ENCODE measurements at regions of chr17 and their contacts with region 1.

Region 1: GRCh38 chr17:43170766-43171585 is at the start of gene NBR1:
- DNase-seq: peak; percentile 97
- ATAC-seq: peak; percentile 86
- H3K4me3 Mint-ChIP-seq: no peak within 1 kb of the TSS
- H3K27ac Mint-ChIP-seq: no peak within 1 kb of the TSS
- H3K4me1 Mint-ChIP-seq: peaks cover 30% of the 10 kb centered on the region
- H3K27me3 Mint-ChIP-seq: no peaks in the 10 kb centered on the region
- total RNA-seq, gene NBR1: 52.8 to 55.6 TPM

Region 2: GRCh38 chr17:42744806-42745617 is 426.0 kb before region 1 on chr17 and contains the start of gene EZH1:
- CTCF ChIA-PET with region 1: no interaction called
- POLR2A ChIA-PET with region 1: interaction called, 4 read pairs
- intact Hi-C with region 1: loop called in 1 of 2 experiments (anchors 5 kb)
- DNase-seq: peak; percentile 96
- ATAC-seq: peak; percentile 91
- H3K4me3 Mint-ChIP-seq: peak within 1 kb of the TSS; percentile 89
- H3K27ac Mint-ChIP-seq: peak within 1 kb of the TSS; percentile 98
- H3K4me1 Mint-ChIP-seq: peaks cover 19% of the 10 kb centered on the region
- H3K27me3 Mint-ChIP-seq: peaks cover 7% of the 10 kb centered on the region
- total RNA-seq, gene EZH1: 28.6 to 29.5 TPM

Region 3: GRCh38 chr17:42980398-42981397 is 190.3 kb before region 1 on chr17 and contains the start of gene RUNDC1:
- CTCF ChIA-PET with region 1: no interaction called
- POLR2A ChIA-PET with region 1: no interaction called
- intact Hi-C with region 1: loop called in 1 of 2 experiments (anchors 1 kb)
- DNase-seq: peak; percentile 95
- ATAC-seq: peak; percentile 87
- H3K4me3 Mint-ChIP-seq: peak within 1 kb of the TSS; percentile 99
- H3K27ac Mint-ChIP-seq: peak within 1 kb of the TSS; percentile 98
- H3K4me1 Mint-ChIP-seq: peaks cover 32% of the 10 kb centered on the region
- H3K27me3 Mint-ChIP-seq: no peaks in the 10 kb centered on the region
- total RNA-seq, gene RUNDC1: 12.3 to 12.5 TPM

Region 4: DNA sequence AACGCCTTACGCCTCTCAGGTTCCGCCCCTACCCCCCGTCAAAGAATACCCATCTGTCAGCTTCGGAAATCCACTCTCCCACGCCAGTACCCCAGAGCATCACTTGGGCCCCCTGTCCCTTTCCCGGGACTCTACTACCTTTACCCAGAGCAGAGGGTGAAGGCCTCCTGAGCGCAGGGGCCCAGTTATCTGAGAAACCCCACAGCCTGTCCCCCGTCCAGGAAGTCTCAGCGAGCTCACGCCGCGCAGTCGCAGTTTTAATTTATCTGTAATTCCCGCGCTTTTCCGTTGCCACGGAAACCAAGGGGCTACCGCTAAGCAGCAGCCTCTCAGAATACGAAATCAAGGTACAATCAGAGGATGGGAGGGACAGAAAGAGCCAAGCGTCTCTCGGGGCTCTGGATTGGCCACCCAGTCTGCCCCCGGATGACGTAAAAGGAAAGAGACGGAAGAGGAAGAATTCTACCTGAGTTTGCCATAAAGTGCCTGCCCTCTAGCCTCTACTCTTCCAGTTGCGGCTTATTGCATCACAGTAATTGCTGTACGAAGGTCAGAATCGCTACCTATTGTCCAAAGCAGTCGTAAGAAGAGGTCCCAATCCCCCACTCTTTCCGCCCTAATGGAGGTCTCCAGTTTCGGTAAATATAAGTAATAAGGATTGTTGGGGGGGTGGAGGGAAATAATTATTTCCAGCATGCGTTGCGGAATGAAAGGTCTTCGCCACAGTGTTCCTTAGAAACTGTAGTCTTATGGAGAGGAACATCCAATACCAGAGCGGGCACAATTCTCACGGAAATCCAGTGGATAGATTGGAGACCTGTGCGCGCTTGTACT is 45.6 kb before region 1 on chr17 and contains the start of gene BRCA1:
- CTCF ChIA-PET with region 1: interaction called, 5 read pairs
- POLR2A ChIA-PET with region 1: interaction called, 7 read pairs
- intact Hi-C with region 1: loop called (anchors 1 kb)
- DNase-seq: peak; percentile 97
- ATAC-seq: peak; percentile 99
- H3K4me3 Mint-ChIP-seq: peak within 1 kb of the TSS; percentile 99
- H3K27ac Mint-ChIP-seq: peak within 1 kb of the TSS; percentile 99
- H3K4me1 Mint-ChIP-seq: peaks cover 19% of the 10 kb centered on the region
- H3K27me3 Mint-ChIP-seq: no peaks in the 10 kb centered on the region
- total RNA-seq, gene BRCA1: 99.9 to 115 TPM

Region 5: GRCh38 chr17:43316522-43317142 is 145.7 kb after region 1 on chr17:
- CTCF ChIA-PET with region 1: no interaction called
- POLR2A ChIA-PET with region 1: interaction called, 19 read pairs
- intact Hi-C with region 1: loop called (anchors 1 kb)
- DNase-seq: peak; percentile 38
- ATAC-seq: no peak
- H3K4me3 Mint-ChIP-seq: no peak overlapping the region
- H3K27ac Mint-ChIP-seq: no peak overlapping the region
- H3K4me1 Mint-ChIP-seq: peaks cover 11% of the 10 kb centered on the region
- H3K27me3 Mint-ChIP-seq: no peaks in the 10 kb centered on the region

Region 6: GRCh38 chr17:43338886-43339516 is 168.0 kb after region 1 on chr17:
- CTCF ChIA-PET with region 1: no interaction called
- POLR2A ChIA-PET with region 1: no interaction called
- intact Hi-C with region 1: no loop called
- DNase-seq: peak; percentile 81
- ATAC-seq: no peak
- H3K4me3 Mint-ChIP-seq: no peak overlapping the region
- H3K27ac Mint-ChIP-seq: no peak overlapping the region
- H3K4me1 Mint-ChIP-seq: peaks cover 38% of the 10 kb centered on the region
- H3K27me3 Mint-ChIP-seq: no peaks in the 10 kb centered on the region

Region 7: GRCh38 chr17:43483674-43484372 is 312.8 kb after region 1 on chr17 and contains the start of gene DHX8:
- CTCF ChIA-PET with region 1: interaction called, 3 read pairs
- POLR2A ChIA-PET with region 1: no interaction called
- intact Hi-C with region 1: loop called in 1 of 2 experiments (anchors 1 kb)
- DNase-seq: peak; percentile 99
- ATAC-seq: peak; percentile 94
- H3K4me3 Mint-ChIP-seq: peak within 1 kb of the TSS; percentile 100
- H3K27ac Mint-ChIP-seq: peak within 1 kb of the TSS; percentile 99
- H3K4me1 Mint-ChIP-seq: peaks cover 19% of the 10 kb centered on the region
- H3K27me3 Mint-ChIP-seq: no peaks in the 10 kb centered on the region
- total RNA-seq, gene DHX8: 42.6 to 46.9 TPM